ENCODE measurements at regions of chr20 and their contacts with region 1.

Region 1: GRCh38 chr20:46022411-46023147 is 6.4 kb upstream of the SLC12A5 start:
- DNase-seq: peak; percentile 64
- H3K4me3 Mint-ChIP-seq: peak overlapping the region; percentile 78
- H3K27ac Mint-ChIP-seq: no peak overlapping the region
- H3K4me1 Mint-ChIP-seq: peaks cover 23% of the 10 kb centered on the region
- H3K27me3 Mint-ChIP-seq: peaks cover 47% of the 10 kb centered on the region

Region 2: DNA sequence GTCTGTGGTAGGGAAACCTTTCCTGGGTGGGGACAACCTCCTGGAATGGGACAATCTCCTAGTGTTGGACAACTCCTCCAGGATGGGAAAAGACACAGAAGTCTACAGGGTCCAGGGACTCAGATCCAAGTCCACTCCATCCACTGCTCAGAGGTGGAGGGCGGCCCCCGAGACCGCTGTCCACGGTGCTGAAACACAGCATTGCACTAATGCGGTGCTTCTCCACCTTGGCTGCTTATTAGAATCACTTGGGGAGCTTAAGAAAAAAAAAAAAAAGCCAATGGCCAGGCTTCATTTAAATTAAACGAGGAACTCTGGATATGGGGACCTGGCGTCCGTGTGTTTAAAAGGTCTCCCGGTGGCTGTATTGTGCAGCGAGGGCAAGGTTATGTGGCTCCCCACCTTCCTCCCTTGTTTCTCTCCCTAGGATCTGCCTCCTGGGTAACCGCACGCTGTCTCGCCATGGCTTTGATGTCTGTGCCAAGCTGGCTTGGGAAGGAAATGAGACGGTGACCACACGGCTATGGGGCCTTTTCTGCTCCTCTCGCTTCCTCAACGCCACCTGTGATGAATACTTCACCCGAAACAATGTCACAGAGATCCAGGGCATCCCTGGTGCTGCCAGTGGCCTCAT is 18.4 kb after region 1 on chr20:
- intact Hi-C with region 1: loop called (anchors 1 kb)
- DNase-seq: peak; percentile 24
- H3K4me3 Mint-ChIP-seq: no peak overlapping the region
- H3K27ac Mint-ChIP-seq: no peak overlapping the region
- H3K4me1 Mint-ChIP-seq: no peaks in the 10 kb centered on the region
- H3K27me3 Mint-ChIP-seq: peaks cover 5% of the 10 kb centered on the region

Region 3: DNA sequence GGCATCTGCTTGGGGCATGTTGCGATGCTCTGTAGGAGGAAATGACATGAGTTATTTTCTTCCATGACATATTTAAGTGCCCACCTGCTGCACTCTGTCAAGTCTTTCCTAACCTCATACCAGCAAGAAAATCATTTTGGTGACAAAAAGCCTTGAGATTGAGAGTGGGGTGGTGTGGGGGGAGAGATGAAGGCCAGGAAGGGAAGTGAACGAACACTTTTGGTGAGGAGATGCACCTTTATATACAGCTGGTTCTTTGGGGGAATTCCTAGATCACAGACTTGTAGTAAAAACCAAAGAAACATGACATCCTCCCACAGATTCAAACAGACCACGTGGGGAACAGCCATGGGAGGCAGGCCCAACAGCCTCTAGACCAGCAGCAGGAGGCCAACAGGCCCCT is 41.1 kb after region 1 on chr20:
- intact Hi-C with region 1: loop called (anchors 2 kb)
- DNase-seq: peak; percentile 17
- H3K4me3 Mint-ChIP-seq: peak overlapping the region; percentile 58
- H3K27ac Mint-ChIP-seq: peak overlapping the region; percentile 93
- H3K4me1 Mint-ChIP-seq: peaks cover 59% of the 10 kb centered on the region
- H3K27me3 Mint-ChIP-seq: peaks cover 5% of the 10 kb centered on the region

Region 4: DNA sequence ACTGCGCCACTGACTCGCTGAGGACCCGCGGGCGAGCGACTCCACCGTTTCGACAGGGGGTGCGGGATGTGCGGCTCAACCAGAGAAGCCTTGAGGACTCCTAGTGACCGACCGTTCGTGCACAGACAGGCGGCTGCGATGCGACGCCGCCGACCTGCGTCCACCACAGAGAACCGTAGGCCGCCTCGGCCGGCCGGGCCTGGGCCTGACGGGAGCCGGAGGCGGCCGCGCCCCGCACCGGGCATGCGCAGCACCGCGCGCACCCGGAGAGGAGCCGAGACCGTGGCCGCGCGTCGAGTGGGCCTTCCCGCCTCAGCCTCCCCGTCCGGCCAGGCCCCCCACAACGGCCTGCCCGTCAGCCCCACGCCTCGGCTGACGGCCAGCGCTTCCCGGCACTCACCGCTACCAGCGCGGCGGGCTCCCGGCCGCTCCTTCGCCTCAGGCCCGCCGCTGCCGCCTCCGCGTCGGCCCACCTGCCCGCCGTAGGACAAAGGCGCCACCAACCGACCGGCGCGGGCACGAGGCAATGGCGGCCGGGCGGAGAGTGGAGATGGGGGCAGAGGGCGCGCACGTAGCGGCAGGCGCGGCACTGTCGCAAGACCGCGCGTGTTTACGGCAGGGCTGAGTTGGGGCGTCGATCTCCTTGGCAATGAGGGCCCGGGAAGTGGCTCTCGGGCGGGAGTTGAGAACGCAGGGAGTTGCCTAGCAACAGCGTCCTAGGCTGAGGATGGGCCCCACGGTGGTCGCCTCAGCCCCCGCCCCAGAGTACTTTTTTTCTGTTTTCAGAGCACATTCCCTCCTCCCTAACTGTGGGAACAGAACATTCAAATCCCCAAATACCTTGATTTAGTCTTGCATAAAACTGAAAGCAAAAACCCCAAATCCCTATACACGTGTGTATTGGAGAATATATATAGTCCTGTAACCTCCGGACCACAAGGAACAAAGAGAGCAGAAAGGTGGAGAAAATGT is 67.1 kb after region 1 on chr20 and contains the start of gene NCOA5:
- intact Hi-C with region 1: loop called (anchors 1 kb)
- DNase-seq: peak; percentile 91
- H3K4me3 Mint-ChIP-seq: peak within 1 kb of the TSS; percentile 92
- H3K27ac Mint-ChIP-seq: peak within 1 kb of the TSS; percentile 94
- H3K4me1 Mint-ChIP-seq: peaks cover 48% of the 10 kb centered on the region
- H3K27me3 Mint-ChIP-seq: peaks cover 4% of the 10 kb centered on the region
- total RNA-seq, gene NCOA5: 30.4 and 32.9 TPM in 2 replicates

Region 5: DNA sequence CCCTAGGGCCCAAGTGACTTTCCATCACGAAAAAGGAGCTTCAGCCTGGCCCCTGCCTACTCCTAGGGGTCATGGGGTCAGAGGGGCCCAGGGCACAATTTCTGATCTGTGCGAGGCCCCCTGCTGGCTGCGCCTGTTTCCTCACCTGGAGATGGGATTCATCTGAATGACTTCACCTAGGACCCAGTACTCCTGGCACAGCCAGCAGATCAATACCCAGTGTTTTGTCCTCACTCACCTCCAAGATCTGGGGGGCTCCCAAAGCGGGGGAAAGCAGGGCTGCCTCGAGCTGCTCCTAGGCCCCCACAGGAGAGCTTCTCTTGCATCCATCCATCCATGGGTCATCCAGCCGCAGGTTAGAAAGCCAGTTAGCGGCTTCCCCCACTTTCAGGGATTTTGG is 129.4 kb after region 1 on chr20:
- intact Hi-C with region 1: loop called (anchors 1 kb)
- DNase-seq: no peak
- H3K4me3 Mint-ChIP-seq: no peak overlapping the region
- H3K27ac Mint-ChIP-seq: no peak overlapping the region
- H3K4me1 Mint-ChIP-seq: no peaks in the 10 kb centered on the region
- H3K27me3 Mint-ChIP-seq: peaks cover 5% of the 10 kb centered on the region

Region 6: DNA sequence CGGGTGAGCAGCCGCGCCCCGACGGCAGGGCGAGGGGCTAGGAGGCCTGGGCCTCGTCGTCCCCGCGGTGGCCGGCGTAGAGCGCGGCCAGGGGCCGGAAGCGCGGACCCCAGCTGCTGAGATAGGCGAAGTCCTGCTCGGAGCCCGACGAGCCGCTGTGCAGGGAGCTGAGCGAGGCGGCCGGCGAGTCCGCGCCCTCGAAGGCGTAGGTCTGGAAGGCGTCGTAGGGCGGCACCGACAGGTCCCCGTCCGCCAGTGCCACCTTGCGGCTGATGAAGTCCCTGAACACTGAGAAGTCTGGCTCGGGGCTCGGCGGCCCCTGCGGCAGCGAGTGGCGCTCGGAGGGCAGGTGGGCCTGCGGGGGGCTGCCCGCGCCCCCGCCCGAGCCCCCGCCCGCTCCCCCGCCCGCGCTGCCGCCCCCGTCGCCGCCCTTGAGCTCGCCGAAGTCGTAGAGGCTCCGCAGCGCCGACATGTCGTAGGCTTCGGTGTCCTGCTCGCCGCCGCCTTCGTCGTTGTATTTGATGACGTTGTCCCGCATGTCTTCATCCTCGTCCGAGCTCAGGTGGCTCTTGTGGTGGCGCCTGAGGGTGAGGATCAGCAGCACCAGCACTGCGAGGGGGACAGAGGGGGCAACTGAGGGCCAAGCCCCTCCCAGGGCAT is 152.0 kb after region 1 on chr20:
- intact Hi-C with region 1: loop called (anchors 1 kb)
- DNase-seq: peak; percentile 51
- H3K4me3 Mint-ChIP-seq: no peak overlapping the region
- H3K27ac Mint-ChIP-seq: no peak overlapping the region
- H3K4me1 Mint-ChIP-seq: no peaks in the 10 kb centered on the region
- H3K27me3 Mint-ChIP-seq: peaks cover 38% of the 10 kb centered on the region

Region 7: DNA sequence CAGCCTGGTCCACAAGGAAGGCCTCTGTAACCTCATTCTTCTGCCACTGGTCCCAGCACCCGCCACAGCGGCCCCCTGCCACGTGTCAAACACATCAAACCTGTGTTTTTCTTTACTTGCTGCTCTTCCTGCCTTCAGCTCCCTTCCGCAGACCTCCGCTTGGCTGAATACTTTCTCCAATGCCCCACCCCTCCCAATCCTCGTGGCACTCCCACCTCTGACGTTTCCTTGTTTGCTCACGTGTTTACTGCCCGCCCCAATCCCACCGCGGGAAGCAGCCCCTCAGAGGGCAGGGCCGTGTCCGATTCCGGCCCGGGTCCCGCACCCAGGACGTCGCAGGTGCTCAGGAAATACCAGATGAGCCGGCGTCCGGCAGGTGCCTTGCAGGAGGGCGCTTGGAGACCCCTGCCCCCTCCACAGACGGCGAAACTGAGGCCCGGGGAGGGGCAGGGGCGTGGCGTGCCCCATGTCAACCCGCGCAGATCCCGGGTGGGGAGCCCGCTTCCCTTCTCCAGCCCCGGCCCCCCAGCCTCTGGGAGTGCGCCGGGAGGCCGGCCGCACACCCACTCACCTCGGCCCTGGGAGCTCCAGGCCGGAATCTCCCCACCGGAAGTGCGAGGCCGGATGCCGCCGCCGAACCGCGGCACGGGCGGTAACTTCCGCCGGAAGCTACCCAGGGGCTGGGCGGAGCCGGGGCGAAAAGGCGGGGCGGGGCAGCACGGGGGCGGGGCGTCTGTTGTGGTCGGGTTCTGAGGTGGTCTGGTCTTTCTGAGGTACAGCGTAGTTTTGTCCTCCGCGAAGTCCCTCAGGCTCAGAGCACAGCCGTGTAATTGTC is 341.4 kb after region 1 on chr20:
- intact Hi-C with region 1: loop called (anchors 5 kb)
- DNase-seq: peak; percentile 82
- H3K4me3 Mint-ChIP-seq: peak overlapping the region; percentile 93
- H3K27ac Mint-ChIP-seq: peak overlapping the region; percentile 82
- H3K4me1 Mint-ChIP-seq: peaks cover 66% of the 10 kb centered on the region
- H3K27me3 Mint-ChIP-seq: no peaks in the 10 kb centered on the region